HepG2 (cell line): ENCODE measurements at regions of chr18 and their contacts with region 1.

Region 1: DNA sequence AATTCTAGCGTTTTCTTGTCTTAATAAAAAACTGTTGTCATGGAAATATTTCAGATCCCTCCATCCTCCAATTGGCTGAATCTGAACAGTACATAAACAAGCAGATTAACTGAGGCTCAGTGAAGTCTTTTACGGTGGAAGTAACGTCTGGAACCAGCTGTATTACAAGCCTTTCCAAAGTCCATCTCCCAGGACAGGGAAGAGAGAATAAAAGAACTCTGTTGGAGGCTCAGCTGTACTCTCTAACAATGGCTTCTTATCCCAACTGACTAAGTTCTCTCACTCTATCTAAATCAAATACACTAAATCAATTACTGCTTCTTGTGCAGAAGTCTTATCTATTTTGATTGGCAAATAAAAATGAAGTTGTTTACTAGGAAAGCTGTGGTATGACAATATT is 19.9 kb upstream of the NEDD4L start:
- DNase-seq: peak; percentile 94
- ATAC-seq: peak; percentile 93
- H3K4me3 ChIP-seq: no peak overlapping the region
- H3K27ac ChIP-seq: peak overlapping the region; percentile 61
- H3K4me1 ChIP-seq: peaks cover 96% of the 10 kb centered on the region
- H3K27me3 ChIP-seq: no peaks in the 10 kb centered on the region
- CTCF ChIP-seq: no peak
- EP300 ChIP-seq: peak in 1 of 2 experiments; percentile 71; a peak in 1 of 4 replicates
- POLR2A ChIP-seq: no peak
- RAD21 ChIP-seq: no peak

Region 2: DNA sequence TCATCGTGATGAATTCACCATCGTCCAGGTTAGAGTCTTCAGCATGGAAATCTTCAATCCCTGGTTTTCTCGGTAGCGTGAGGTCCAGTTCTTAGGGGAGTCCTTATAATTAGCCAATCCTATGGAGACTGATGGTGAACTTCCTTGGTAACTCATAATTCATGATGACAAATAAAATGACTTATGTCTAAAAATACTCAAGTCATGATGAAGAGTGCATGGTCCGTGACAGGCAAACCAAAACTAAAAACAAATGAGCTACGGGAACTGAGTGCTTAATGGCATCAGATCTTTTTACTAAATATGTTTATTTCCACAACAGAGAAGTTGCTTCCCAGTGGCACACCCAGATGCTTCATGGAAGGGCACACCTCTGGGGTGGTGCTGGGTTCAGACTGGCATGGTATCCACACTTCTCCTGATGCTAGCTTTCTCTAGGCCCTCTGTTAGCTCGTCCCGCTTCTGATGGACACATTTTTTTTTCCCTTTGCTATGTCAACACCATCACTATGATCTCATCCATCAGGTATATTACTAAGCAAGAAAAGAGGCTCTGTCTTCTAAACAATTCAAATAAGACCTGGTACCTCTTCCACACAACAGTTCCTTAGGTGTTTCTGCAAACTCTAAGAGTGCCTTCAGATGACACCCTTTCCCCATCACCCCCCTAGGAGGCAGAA is 72.9 kb before region 1 on chr18:
- CTCF ChIA-PET with region 1: no interaction called
- POLR2A ChIA-PET with region 1: no interaction called
- in situ Hi-C with region 1: no loop called
- intact Hi-C with region 1: loop called (anchors 2 kb)
- DNase-seq: peak; percentile 20
- ATAC-seq: peak; percentile 63
- H3K4me3 ChIP-seq: peak overlapping the region in 1 of 3 experiments; percentile 22; a peak in 1 of 6 replicates
- H3K27ac ChIP-seq: no peak overlapping the region
- H3K4me1 ChIP-seq: peaks cover 31% of the 10 kb centered on the region
- H3K27me3 ChIP-seq: peaks cover 0 to 1% of the 10 kb centered on the region in 2 experiments; a peak in 2 of 5 replicates
- CTCF ChIP-seq: no peak
- EP300 ChIP-seq: no peak
- POLR2A ChIP-seq: no peak
- RAD21 ChIP-seq: no peak

Region 3: DNA sequence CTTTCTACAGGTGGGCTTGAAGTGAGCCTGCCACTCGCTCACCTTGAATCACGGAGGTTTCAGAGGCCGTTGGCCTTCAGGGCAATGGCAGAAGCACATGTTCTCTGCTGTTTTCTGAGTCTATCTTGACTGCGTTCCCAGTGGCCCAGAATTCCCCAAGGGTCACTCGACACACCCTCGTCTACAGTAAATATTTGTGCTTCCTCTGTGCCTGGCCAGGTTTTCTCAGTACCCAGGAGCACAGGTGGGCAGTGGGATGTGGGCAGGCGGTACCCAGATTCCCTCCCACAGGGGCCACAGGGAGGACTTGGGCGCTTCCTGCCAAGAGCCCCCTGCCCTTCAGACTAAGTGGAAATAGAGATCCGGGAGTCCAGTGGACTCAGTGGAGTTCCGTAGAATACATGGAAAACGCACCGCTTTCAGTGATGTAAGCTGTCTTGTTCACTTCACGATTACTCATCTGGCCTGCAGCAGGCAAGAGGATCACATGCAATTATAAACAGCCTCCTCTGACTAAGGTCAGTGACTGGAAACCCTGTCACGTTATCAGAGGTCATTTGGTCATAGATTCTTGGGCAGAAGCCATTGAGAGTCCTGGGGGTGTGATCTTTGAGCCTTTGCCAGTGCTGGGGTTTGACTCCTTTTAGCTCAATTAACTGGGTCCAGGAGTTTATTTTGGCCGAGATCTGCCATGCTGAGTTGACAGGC is 199.7 kb after region 1 on chr18:
- CTCF ChIA-PET with region 1: no interaction called
- POLR2A ChIA-PET with region 1: no interaction called
- in situ Hi-C with region 1: no loop called
- intact Hi-C with region 1: no loop called
- DNase-seq: peak; percentile 81
- ATAC-seq: peak; percentile 81
- H3K4me3 ChIP-seq: peak overlapping the region; percentile 56 to 96 (median 75)
- H3K27ac ChIP-seq: peak overlapping the region; percentile 67
- H3K4me1 ChIP-seq: peaks cover 59% of the 10 kb centered on the region
- H3K27me3 ChIP-seq: no peaks in the 10 kb centered on the region
- CTCF ChIP-seq: no peak
- EP300 ChIP-seq: no peak
- POLR2A ChIP-seq: peak in 1 of 2 experiments; percentile 27; a peak in 1 of 4 replicates
- RAD21 ChIP-seq: no peak